MCF 10A (cell line): ENCODE measurements at regions of chr12 and their contacts with region 1.

Region 1: DNA sequence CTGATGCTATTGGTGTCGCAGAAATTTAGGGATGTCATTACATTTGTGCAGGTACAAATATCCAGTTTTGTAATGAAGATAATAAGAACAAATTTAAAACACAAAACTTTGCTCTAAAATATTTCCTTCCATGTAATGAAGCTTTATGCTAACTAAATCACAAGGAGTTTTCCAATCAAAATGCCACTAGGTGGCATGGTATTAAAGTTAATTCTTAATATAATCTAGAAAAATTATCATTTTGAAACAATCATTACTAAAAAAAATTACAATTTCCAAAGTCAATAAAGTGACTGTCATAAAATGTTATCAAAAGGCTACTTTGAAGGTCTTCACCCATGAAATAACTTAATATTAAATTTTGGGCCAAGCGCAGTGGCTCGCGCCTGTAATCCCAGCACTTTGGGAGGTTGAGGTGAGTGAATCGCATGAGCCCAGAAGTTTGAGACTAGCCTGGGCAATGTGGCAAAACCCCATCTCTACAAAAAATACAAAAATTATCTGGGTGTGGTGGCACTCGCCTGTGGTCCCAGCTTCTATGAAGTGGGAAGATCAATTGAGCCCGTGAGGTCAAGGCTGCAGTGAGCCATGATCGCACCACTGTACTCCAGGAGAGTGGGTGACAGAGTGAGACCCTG is 77.4 kb downstream of the KIF21A start:
- DNase-seq: no peak
- H3K4me3 Mint-ChIP-seq: no peak overlapping the region
- H3K27ac Mint-ChIP-seq: no peak overlapping the region
- H3K4me1 Mint-ChIP-seq: no peaks in the 10 kb centered on the region
- H3K27me3 Mint-ChIP-seq: no peaks in the 10 kb centered on the region
- CTCF ChIP-seq: peak; percentile 9

Region 2: GRCh38 chr12:39343665-39344064 is 21.8 kb before region 1 on chr12:
- CTCF ChIA-PET with region 1: interaction called, 11 read pairs
- POLR2A ChIA-PET with region 1: no interaction called
- intact Hi-C with region 1: no loop called
- DNase-seq: no peak
- H3K4me3 Mint-ChIP-seq: no peak overlapping the region
- H3K27ac Mint-ChIP-seq: no peak overlapping the region
- H3K4me1 Mint-ChIP-seq: no peaks in the 10 kb centered on the region
- H3K27me3 Mint-ChIP-seq: no peaks in the 10 kb centered on the region
- CTCF ChIP-seq: no peak

Region 3: DNA sequence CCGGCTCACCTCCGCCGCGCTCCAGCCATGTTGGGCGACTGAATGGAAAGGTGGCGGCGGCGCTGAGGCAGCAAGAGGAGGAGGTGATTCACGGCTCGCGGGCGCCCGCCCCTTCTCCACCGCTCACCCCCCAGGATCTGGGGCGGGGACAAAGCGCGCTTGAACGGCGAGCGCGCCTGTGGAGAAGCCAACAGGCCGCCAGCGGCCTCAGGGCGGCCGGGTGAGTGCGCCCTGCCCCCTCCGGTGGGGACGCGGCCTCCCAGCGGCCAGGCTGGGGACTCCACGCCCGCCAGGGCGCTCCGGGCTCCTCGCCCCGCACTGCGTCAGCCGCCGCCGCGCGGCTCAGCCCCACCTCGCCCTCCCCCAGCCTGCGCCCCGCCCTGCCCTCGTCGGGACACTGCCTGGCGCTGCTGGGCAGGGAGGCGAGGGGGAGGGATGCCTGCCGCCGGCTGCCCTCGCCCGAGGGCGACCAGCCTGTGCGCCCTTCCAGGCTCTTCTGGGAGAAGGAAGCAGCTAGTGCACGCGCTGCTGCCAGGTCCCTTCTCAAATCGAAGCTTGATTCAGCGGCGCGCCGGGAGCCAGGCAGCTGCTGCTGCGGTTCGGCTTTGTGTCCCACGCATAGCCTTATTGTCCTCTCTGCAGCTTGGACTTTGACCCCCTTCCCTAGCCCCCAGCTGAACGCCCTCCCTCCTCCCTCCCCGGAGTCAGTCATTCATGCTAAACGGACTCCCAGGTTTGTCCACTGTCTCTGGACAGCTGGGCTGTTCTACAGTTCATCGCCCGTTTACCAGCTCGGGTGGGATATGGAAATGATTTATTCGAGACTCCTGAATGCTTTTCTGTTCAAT is 77.8 kb after region 1 on chr12 and contains the start of gene KIF21A:
- CTCF ChIA-PET with region 1: interaction called, 3 read pairs
- POLR2A ChIA-PET with region 1: interaction called, 11 read pairs
- intact Hi-C with region 1: loop called (anchors 5 kb)
- DNase-seq: peak; percentile 95
- H3K4me3 Mint-ChIP-seq: peak within 1 kb of the TSS; percentile 82
- H3K27ac Mint-ChIP-seq: peak within 1 kb of the TSS; percentile 78
- H3K4me1 Mint-ChIP-seq: peaks cover 17% of the 10 kb centered on the region
- H3K27me3 Mint-ChIP-seq: no peaks in the 10 kb centered on the region
- CTCF ChIP-seq: peak; percentile 57
- total RNA-seq, gene KIF21A: 44.1 and 53.8 TPM in 2 replicates

Region 4: GRCh38 chr12:39587225-39587624 is 221.7 kb after region 1 on chr12:
- CTCF ChIA-PET with region 1: interaction called, 3 read pairs
- POLR2A ChIA-PET with region 1: no interaction called
- intact Hi-C with region 1: loop called (anchors 1 kb)
- DNase-seq: peak; percentile 60
- H3K4me3 Mint-ChIP-seq: no peak overlapping the region
- H3K27ac Mint-ChIP-seq: no peak overlapping the region
- H3K4me1 Mint-ChIP-seq: peaks cover 23% of the 10 kb centered on the region
- H3K27me3 Mint-ChIP-seq: no peaks in the 10 kb centered on the region
- CTCF ChIP-seq: peak; percentile 43

Region 5: GRCh38 chr12:39692258-39692853 is 326.9 kb after region 1 on chr12:
- CTCF ChIA-PET with region 1: interaction called, 8 read pairs
- POLR2A ChIA-PET with region 1: interaction called, 5 read pairs
- intact Hi-C with region 1: loop called (anchors 2 kb)
- DNase-seq: peak; percentile 3
- H3K4me3 Mint-ChIP-seq: no peak overlapping the region
- H3K27ac Mint-ChIP-seq: no peak overlapping the region
- H3K4me1 Mint-ChIP-seq: no peaks in the 10 kb centered on the region
- H3K27me3 Mint-ChIP-seq: no peaks in the 10 kb centered on the region
- CTCF ChIP-seq: no peak

Region 6: DNA sequence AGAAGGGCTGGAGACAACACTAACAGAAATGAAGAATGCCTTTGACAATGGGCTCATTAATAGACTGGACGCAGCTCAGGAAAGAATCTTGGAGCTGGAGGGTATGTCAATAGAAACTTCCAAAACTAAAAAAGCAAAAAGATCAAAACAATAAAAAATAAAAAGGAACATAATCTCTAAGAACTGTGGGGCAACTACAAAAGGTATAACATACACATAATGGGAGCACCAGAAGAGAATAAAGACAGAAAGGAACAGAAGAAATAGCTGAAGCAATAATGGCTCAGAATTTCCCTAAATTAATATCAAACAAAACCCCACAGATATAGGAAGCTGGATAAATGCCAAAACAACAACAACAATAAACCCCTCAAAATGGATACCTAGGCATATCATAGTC is 378.2 kb after region 1 on chr12:
- CTCF ChIA-PET with region 1: no interaction called
- POLR2A ChIA-PET with region 1: no interaction called
- intact Hi-C with region 1: no loop called
- DNase-seq: no peak
- H3K4me3 Mint-ChIP-seq: no peak overlapping the region
- H3K27ac Mint-ChIP-seq: no peak overlapping the region
- H3K4me1 Mint-ChIP-seq: no peaks in the 10 kb centered on the region
- H3K27me3 Mint-ChIP-seq: no peaks in the 10 kb centered on the region
- CTCF ChIP-seq: no peak